ENCODE measurements at regions of chr2 and their contacts with region 1.

Region 1: GRCh38 chr2:71477231-71477691 is 23.9 kb downstream of the DYSF start:
- DNase-seq: no peak
- H3K4me3 ChIP-seq: no peak overlapping the region
- H3K27ac ChIP-seq: no peak overlapping the region
- H3K4me1 ChIP-seq: peaks cover 2 to 5% (median 4%) of the 10 kb centered on the region in 4 experiments; a peak in 5 of 7 replicates
- H3K27me3 ChIP-seq: no peaks in the 10 kb centered on the region; a peak in 1 of 7 replicates
- CTCF ChIP-seq: no peak
- EP300 ChIP-seq: no peak
- POLR2A ChIP-seq: no peak
- RAD21 ChIP-seq: no peak

Region 2: GRCh38 chr2:71452565-71452964 is 24.7 kb before region 1 on chr2:
- CTCF ChIA-PET with region 1: interaction called, 25 read pairs
- POLR2A ChIA-PET with region 1: interaction called, 9 read pairs
- DNase-seq: no peak
- H3K4me3 ChIP-seq: peak overlapping the region in 1 of 4 experiments; percentile 62; a peak in 2 of 8 replicates
- H3K27ac ChIP-seq: no peak overlapping the region
- H3K4me1 ChIP-seq: peaks cover 24 to 33% (median 27%) of the 10 kb centered on the region in 4 experiments
- H3K27me3 ChIP-seq: peaks cover 0 to 23% (median 17%) of the 10 kb centered on the region in 4 experiments; a peak in 6 of 7 replicates
- CTCF ChIP-seq: peak; percentile 48 to 49 (median 48)
- EP300 ChIP-seq: no peak
- POLR2A ChIP-seq: no peak
- RAD21 ChIP-seq: peak; percentile 27 to 42; a peak in 2 of 4 replicates

Region 3: DNA sequence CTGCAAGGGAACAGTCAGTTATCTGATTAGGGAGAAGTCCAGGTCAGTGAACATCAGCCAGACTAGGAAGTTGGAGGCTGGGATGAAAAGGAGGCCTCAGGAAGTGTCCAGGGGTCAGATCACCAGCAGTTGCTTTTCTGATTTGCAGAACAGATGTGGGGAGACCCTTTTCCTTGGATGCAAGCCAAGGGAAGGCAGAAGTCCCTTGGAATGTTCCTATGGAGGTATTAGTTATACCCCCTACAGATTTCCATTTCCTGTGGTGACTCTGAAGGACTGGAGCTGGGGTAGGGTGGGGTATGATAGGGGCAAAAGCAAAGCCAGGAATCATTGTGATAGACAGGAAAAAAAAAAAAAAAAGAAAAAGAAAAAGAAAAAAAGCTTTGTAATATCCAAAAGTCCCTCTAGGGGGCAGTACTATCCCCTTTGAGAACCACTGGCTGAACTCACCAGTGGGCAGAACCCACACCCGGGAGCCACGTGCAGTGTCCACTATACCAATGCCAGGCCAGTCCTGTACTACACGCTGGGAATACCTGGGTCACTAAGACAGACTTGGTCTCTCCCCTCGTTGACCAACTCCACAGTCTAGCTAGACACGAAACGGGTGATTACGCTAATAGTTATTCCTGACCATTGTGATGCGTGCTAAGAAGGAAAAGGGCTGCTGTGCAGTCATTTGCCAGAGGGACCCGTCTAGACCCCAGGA is 16.5 kb before region 1 on chr2:
- CTCF ChIA-PET with region 1: interaction called, 66 read pairs
- POLR2A ChIA-PET with region 1: interaction called, 9 read pairs
- DNase-seq: peak in 1 of 2 experiments; percentile 67
- H3K4me3 ChIP-seq: no peak overlapping the region
- H3K27ac ChIP-seq: no peak overlapping the region
- H3K4me1 ChIP-seq: peaks cover 8 to 29% (median 17%) of the 10 kb centered on the region in 4 experiments
- H3K27me3 ChIP-seq: peaks cover 24 to 66% (median 57%) of the 10 kb centered on the region in 4 experiments
- CTCF ChIP-seq: peak in 2 of 3 experiments; percentile 47 to 48; a peak in 2 of 4 replicates
- EP300 ChIP-seq: no peak
- POLR2A ChIP-seq: no peak
- RAD21 ChIP-seq: peak; percentile 53 to 57

Region 4: DNA sequence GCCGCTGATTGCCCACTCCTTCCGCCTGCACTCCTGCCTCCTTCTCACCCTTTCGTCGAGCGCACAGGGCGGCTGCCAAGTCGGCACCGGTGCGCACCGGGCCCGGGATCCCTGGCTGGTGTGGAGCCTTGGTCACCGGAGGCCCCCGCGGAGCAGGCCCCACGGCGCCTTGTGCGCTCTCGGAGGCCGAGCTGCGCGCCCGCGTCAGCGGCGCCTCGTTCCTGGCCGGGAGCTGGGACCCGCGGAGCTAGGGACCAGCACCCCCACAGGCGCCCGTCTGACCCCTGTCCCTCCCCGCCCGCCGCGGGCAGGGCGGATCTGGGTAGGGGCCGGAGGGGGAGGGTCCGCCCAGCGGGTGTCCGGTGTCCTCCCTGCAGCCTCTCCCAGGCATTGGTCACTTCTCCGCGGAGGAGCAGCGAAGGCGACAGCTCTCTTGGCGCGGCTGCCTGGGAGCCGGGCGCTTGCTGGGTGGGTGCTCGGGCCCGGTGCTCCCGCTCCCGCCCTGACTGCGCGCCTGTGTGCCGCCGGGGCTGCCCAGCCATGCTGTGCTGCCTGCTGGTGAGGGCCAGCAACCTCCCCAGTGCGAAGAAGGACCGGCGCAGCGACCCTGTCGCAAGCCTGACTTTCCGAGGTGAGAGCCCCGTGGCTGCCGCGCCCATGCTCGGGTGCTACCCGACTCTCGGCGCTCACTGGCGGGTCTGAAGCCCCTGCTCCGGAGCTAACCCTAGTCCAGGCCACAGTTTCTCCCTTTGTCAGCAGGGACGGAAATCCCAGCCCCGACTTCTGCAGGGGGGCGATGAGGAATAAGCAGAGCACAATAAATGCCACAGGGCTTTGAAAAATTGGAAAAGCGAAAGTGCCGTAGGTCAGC is 10.7 kb before region 1 on chr2:
- CTCF ChIA-PET with region 1: interaction called, 66 read pairs
- POLR2A ChIA-PET with region 1: interaction called, 3 read pairs
- DNase-seq: peak in 1 of 2 experiments; percentile 72
- H3K4me3 ChIP-seq: peak overlapping the region; percentile 35 to 62 (median 56)
- H3K27ac ChIP-seq: no peak overlapping the region
- H3K4me1 ChIP-seq: peaks cover 0 to 12% (median 4%) of the 10 kb centered on the region in 4 experiments; a peak in 4 of 7 replicates
- H3K27me3 ChIP-seq: peaks cover 41 to 78% (median 78%) of the 10 kb centered on the region in 4 experiments
- CTCF ChIP-seq: no peak
- EP300 ChIP-seq: no peak
- POLR2A ChIP-seq: no peak
- RAD21 ChIP-seq: no peak

Measured in H1 (cell line).